Common myeloid progenitor, CD34-positive (primary cell): ENCODE measurements at regions of chr10 and their contacts with region 1.

Region 1: GRCh38 chr10:86376852-86377796 is 10.5 kb upstream of the GRID1 start:
- DNase-seq: peak; percentile 60 to 86 (median 83)
- H3K4me3 ChIP-seq: peak overlapping the region in 2 of 7 experiments; percentile 28 to 39
- H3K27ac ChIP-seq: no peak overlapping the region
- H3K4me1 ChIP-seq: peaks cover 0 to 4% (median 2%) of the 10 kb centered on the region in 4 experiments
- H3K27me3 ChIP-seq: peaks cover 2 to 38% (median 15%) of the 10 kb centered on the region in 5 experiments

Region 2: GRCh38 chr10:86389441-86390193 is 12.5 kb after region 1 on chr10:
- CTCF ChIA-PET with region 1: interaction called, 11 read pairs
- POLR2A ChIA-PET with region 1: no interaction called
- DNase-seq: peak in 2 of 3 donors; percentile 37 to 55
- H3K4me3 ChIP-seq: peak overlapping the region; percentile 8 to 68 (median 52)
- H3K27ac ChIP-seq: no peak overlapping the region
- H3K4me1 ChIP-seq: peaks cover 0 to 8% (median 7%) of the 10 kb centered on the region in 4 experiments
- H3K27me3 ChIP-seq: peaks cover 0 to 49% (median 20%) of the 10 kb centered on the region in 5 experiments